GM10248 (cell line): ENCODE measurements at regions of chr2 and their contacts with region 1.

Region 1: DNA sequence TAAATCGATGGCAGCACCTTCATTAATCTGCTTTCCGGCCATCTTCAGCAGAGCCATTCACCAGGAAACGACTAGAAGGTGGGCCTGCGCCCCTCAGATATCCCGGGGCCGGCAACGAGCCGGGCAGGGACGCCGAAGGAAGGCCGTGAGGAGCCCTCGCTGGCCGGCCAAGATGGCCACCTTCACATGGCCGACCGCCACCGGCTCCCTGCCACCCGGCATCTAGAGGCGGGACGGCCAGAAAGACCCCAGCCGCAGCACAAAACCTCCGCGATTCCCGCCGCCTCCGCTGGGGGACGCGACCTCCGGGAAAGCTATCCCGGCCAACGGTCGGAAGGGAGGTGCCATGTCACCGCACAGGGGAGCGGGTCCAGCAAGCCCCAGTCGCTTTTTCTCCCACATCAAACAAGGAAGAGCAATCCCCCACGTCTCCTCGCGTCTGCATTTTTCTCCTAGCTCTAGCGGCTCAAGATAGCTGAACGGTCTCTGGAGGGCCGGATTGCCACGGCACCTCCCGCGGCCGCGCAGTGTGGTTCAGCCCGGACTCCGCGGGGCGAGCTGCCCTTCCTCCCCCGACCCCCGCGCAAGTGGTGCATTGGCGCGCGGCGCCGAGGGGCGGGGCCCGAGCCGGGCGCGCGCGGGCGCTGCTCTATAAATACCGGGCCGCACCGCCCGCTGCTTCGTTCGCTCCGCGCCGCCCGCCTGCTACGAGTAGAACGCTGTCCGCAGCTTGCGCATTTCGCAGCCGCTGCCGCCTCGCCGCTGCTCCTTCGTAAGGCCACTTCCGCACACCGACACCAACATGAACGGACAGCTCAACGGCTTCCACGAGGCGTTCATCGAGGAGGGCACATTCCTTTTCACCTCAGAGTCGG is at the start of gene MAT2A:
- DNase-seq: peak; percentile 95
- CTCF ChIP-seq: peak; percentile 71

Region 2: GRCh38 chr2:85354286-85355072 is 184.2 kb before region 1 on chr2 and contains the starts of genes ELMOD3 and RETSAT:
- CTCF ChIA-PET with region 1: no interaction called
- POLR2A ChIA-PET with region 1: interaction called, 27 read pairs
- DNase-seq: peak; percentile 97
- CTCF ChIP-seq: no peak

Region 3: DNA sequence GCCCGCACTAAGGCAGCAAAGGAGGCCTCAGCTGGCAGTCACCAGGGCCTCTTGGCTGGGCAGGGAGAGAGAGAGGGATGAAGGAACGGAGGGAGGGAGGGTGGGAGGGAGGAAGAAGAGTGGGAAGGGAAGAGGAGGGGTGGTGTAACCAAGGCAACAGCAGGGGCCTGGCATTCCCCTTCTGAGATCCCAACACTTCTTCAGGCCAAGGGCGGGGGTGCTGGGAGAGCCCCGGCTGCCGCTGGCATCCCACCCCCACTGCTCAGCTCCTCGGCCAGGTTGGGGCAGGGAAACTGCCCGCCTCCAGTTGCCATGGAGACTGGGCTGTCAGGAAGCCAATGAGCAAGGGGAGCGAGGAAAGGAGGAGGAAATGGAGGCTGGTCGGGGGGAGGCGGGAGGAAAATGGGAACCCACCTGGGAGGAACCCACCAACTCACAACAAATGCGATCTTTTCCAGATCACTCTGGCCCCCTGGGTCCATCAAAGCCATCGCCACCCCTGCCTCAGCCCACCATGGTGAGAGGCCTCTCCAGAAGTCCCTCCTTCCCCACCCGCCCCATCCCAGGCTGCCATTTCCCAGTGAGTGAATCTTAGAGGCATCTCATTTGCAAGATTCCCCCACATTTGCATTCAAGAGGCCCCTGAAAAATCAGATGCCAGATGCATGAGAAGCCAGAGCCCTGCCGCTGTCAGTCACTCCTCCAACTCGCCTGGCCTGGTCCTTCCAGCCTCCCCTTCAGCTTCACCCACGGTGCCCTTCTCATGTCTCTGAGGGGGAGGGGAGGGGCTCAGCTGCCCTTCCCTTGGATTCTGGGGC is 107.8 kb before region 1 on chr2:
- CTCF ChIA-PET with region 1: interaction called, 5 read pairs
- POLR2A ChIA-PET with region 1: interaction called, 10 read pairs
- DNase-seq: no peak
- CTCF ChIP-seq: no peak

Region 4: DNA sequence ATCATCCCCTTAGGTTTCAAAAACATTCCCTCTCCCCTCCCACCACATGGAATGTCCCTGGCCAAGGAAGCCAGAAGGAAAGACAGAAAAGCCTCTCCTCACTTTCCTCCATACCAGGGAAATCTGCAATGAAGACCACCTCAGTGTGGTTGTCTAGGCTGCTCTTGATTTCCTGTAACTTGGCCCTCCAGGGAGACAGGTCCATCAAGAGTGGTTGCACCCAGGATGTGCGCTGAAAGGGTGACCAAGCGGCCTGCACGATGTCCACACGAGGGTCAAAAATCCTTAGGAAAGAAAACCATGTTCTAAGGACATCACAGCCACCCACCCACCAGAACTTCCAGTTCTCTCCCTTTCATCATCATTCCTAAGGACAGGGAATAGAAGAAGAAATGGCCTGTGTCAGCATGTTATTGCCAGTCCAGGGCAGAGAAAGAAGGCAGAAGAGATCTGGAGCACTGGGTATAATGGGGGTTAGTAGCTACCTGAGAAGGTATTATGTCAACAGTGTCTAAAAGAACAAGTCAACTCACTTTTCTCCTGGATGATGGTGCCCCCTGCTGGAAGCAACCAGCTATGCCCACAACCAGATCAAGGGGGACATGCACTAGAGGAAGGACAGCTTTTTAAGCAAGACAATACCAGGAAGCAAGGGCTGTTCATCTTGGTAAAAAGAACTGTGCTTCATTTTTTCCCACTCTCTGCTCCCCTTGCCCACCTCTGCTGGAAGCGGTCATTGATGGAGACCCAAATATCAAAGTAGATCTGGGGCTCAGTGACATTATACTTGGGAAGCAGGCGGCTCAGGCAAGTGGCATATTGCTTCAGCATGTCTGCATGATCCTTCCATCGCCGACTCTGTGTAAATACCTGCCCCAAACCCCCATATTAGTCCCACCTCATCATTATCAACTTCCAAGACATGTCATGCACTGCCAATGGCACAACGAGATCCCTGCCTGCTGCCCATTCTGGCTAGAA is 13.3 kb after region 1 on chr2:
- CTCF ChIA-PET with region 1: interaction called, 180 read pairs
- POLR2A ChIA-PET with region 1: interaction called, 198 read pairs
- DNase-seq: peak; percentile 76
- CTCF ChIP-seq: peak; percentile 87

Region 5: DNA sequence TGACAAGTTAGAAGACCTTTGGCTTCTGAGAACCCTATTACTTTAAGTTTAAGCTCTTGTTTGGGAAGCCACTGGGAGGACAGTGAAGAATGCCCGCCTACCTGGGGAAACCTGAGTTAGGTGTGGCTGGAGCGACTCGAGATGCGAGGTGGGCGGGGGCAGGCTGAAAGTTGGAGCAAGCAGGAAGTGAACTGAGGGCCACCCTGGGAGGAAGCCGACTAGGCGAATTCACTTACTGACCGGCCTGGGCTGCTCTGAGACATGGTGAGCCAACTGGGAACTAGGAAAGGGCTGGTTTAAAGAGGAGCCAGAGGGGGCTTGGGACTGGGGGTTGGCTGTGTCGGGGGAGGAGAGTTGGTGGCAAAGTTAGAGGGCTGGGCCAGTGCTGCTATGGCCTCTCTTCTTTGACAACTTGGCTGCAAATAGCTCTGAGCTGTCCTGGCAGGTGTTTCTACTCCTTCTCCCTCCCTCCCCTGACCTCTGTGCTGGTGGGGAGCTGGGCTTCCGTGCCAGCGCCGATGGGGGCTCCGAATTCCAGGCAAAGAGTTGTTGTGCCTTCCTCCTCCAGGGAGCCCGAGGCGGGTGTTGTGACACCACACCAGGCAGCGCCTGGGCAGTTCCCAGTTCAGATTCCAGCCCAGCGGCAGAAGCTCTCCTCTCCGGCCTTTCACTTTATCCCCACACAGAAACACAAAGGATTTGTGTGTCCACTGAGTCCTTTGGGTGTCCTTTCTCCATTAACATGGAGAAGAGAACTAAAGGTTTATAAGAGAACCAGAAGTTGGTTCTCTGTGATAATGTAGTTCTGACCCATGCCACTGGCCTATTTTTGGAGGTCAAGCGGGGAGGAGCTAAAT is 38.9 kb after region 1 on chr2 and contains the start of gene VAMP8:
- CTCF ChIA-PET with region 1: no interaction called
- POLR2A ChIA-PET with region 1: interaction called, 12 read pairs
- DNase-seq: peak; percentile 80
- CTCF ChIP-seq: no peak